Activated B cell treated with CpG ODN at 0.5 μM for 24 hours (primary cell): ENCODE measurements at regions of chr15 and their contacts with region 1.

Region 1: GRCh38 chr15:55434989-55435825 is 26.9 kb downstream of the PIERCE2 start:
- DNase-seq: no peak
- ATAC-seq: no peak
- H3K4me3 Mint-ChIP-seq: no peak overlapping the region
- H3K27ac Mint-ChIP-seq: no peak overlapping the region
- H3K4me1 Mint-ChIP-seq: no peaks in the 10 kb centered on the region
- H3K27me3 Mint-ChIP-seq: no peaks in the 10 kb centered on the region
- CTCF ChIP-seq: no peak

Region 2: DNA sequence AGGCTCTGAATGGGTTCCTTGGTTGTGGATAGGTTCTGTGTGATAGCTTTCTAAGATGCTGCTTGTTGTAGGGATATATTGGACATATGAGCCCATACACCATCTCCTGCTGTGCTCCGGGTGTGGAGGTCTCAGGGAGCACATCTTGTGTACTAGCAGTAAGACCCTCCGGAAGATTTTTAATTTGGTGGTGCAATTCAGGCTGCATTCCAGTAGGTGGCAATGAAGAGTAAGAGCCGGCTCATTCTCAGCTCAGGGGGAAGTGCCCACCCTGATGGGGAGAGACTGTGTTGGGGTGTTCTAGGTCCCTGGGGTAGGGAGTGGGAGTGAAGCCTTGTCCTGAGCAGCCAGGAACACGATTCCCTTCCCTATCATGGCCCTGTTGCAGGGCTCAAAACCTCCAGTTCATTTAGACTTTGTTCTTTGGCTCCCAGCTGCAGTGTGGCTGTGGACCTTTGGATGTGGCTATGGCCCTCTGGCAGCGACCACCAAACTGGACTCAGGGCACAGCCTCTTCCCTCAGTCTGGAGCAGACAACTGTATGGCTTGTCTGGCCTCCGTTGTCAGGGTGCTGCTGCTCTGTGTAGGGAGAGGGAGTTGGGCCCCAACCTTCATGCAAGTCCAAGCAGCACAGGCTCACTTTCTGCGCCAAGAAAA is 1352.2 kb before region 1 on chr15:
- CTCF ChIA-PET with region 1: interaction called, 6 read pairs
- POLR2A ChIA-PET with region 1: no interaction called
- intact Hi-C with region 1: loop called (anchors 5 kb)
- DNase-seq: no peak
- ATAC-seq: no peak
- H3K4me3 Mint-ChIP-seq: no peak overlapping the region
- H3K27ac Mint-ChIP-seq: no peak overlapping the region
- H3K4me1 Mint-ChIP-seq: no peaks in the 10 kb centered on the region
- H3K27me3 Mint-ChIP-seq: no peaks in the 10 kb centered on the region
- CTCF ChIP-seq: no peak

Region 3: DNA sequence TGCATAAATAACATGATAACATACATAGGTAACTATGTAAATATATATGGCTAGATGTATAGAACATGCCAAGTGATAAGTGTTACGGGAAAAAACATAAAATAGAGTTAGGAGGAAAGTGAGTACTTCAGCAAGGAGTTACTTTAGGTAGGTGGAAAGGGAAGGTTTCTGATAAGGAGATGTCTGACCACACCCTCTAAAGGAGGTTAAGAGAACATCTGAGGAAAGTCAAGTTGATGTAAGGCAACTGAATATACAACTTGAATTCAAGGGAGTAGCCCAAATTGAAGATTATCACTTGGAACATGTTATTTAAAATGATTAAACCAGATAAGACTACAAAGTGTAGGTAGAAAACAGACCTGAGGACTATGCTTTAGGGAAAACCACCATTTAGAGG is 13.1 kb before region 1 on chr15:
- CTCF ChIA-PET with region 1: interaction called, 10 read pairs
- POLR2A ChIA-PET with region 1: no interaction called
- intact Hi-C with region 1: no loop called
- DNase-seq: no peak
- ATAC-seq: no peak
- H3K4me3 Mint-ChIP-seq: no peak overlapping the region
- H3K27ac Mint-ChIP-seq: no peak overlapping the region
- H3K4me1 Mint-ChIP-seq: no peaks in the 10 kb centered on the region
- H3K27me3 Mint-ChIP-seq: no peaks in the 10 kb centered on the region
- CTCF ChIP-seq: no peak